ENCODE measurements at regions of chr12 and their contacts with region 1.

Region 1: GRCh38 chr12:113103756-113104450 is 31.7 kb downstream of the RASAL1 start:
- DNase-seq: no peak
- ATAC-seq: no peak
- H3K4me3 ChIP-seq: peak overlapping the region in 1 of 10 donors; percentile 5
- H3K27ac ChIP-seq: no peak overlapping the region
- H3K4me1 ChIP-seq: peaks cover 0 to 7% (median 0%) of the 10 kb centered on the region in 9 donors
- H3K27me3 ChIP-seq: peaks cover 5 to 58% (median 42%) of the 10 kb centered on the region in 7 donors
- CTCF ChIP-seq: no peak

Region 2: DNA sequence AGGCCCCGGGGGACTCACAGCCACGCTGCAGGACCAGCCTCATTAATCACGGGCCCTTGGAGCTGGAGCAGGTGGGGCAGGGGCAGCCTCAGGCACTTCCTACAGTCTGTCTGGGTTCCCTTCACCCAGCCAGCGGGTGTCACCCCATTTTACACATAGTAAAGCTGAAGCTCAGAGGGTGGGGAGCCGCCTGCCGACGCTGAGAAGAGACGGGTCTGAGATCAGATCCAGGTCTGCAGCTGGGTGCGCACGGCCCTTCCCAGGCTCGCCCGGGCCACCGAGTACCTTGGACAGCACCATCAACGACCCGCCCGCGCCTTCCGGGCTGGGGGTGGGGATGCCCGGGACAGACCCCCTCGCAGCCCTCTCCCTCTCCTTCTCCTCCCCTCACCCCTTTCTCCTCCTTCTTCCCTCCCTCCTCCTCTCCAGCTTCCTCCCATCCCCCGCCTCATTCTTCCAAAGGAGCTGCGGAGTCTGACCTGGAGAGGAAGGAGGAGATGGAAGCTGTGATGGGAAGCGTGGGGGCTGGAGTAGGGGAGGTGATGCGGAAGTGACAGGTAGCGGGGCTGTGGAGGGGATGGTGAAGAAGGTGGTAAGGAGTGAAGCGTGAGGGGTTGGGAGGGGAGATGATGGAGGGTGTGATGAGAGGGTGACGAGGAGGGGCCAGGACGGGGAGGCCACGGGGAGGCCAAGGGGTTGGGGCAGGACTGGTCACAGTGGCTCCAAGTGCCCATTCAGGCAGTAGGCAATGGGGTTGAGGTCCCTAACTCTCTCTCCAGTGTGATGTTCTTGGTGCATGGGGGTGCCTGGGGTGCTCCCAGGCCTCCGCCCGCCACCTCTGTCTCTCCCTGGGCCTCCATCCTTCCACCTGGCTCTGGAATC is 38.5 kb before region 1 on chr12:
- intact Hi-C with region 1: no loop called
- DNase-seq: no peak
- ATAC-seq: peak in 4 of 8 donors; percentile 30 to 40 (median 36)
- H3K4me3 ChIP-seq: no peak overlapping the region
- H3K27ac ChIP-seq: no peak overlapping the region
- H3K4me1 ChIP-seq: peaks cover 0 to 18% (median 3%) of the 10 kb centered on the region in 9 donors
- H3K27me3 ChIP-seq: peaks cover 0 to 53% (median 28%) of the 10 kb centered on the region in 7 donors
- CTCF ChIP-seq: no peak

Region 3: DNA sequence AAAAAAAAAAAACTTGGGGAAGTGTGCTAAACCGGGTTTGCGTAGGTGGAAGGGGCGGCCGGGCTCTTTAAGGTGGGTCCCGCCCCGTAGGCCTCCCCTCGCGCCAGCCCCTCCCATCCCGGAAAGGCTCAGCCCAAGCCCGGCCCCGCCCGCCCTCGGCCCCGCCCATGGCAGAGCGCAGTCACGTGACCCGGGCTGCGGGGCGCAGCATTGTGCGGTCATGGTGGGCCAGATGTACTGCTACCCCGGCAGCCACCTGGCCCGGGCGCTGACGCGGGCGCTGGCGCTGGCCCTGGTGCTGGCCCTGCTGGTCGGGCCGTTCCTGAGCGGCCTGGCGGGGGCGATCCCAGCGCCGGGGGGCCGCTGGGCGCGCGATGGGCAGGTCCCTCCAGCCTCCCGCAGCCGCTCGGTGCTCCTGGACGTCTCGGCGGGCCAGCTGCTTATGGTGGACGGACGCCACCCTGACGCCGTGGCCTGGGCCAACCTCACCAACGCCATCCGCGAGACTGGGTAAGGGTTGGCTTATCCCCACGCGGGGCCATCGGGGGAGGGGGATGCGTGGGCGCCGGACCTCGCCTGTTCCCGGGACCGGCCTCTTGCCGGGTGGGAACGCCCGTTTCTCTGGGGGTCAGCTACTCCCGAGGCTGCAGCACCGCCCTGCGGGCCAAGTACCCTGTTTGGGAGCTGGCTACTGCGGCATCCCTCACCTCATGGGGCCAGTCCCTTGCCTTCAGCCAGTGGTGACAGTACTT is 254.7 kb after region 1 on chr12 and contains the start of gene PLBD2:
- intact Hi-C with region 1: no loop called
- DNase-seq: peak; percentile 94 to 96
- ATAC-seq: peak; percentile 96 to 99 (median 98)
- H3K4me3 ChIP-seq: peak within 1 kb of the TSS; percentile 38 to 96 (median 78)
- H3K27ac ChIP-seq: peak within 1 kb of the TSS; percentile 37 to 95 (median 91)
- H3K4me1 ChIP-seq: peaks cover 5 to 36% (median 17%) of the 10 kb centered on the region in 9 donors
- H3K27me3 ChIP-seq: no peaks in the 10 kb centered on the region
- CTCF ChIP-seq: no peak
- total RNA-seq, gene PLBD2: 24.7 to 53.9 (median 36.1) TPM

Region 4: GRCh38 chr12:114744691-114745090 is 1640.8 kb after region 1 on chr12:
- intact Hi-C with region 1: loop called in 1 of 10 experiments (anchors 5 kb)
- DNase-seq: no peak
- ATAC-seq: no peak
- H3K4me3 ChIP-seq: no peak overlapping the region
- H3K27ac ChIP-seq: no peak overlapping the region
- H3K4me1 ChIP-seq: no peaks in the 10 kb centered on the region
- H3K27me3 ChIP-seq: no peaks in the 10 kb centered on the region
- CTCF ChIP-seq: no peak